ENCODE measurements at regions of chr7 and their contacts with region 1.

Region 1: DNA sequence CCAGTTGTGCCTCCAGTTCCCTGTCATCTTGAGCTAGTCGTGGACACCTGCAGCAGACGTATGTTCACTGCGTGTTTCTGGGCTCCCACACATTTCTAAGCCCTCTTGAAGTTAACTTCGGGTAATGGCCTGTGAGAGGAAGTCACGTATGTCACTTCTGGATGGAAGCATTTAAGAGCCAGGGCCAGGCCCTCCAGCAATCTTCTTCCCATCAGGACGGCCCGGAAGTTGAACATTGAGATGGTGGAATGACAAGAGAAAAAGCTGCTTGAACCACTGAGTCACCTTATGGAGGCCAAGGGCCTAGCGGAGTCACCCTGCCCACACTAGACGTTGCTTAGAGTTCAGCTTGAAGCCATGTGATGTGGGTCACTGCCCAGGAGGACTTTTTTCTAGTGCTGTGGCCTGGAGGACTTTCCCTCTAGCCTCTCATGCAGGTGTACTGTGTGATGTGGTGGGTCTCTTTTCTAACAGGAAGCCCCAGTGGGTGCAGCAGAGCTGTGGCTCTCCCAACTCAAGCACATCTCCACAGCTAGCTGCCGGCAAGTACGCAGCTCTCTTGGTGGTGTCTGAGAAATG is 13.5 kb downstream of the POR start:
- DNase-seq: peak; percentile 64
- CTCF ChIP-seq: no peak

Region 2: DNA sequence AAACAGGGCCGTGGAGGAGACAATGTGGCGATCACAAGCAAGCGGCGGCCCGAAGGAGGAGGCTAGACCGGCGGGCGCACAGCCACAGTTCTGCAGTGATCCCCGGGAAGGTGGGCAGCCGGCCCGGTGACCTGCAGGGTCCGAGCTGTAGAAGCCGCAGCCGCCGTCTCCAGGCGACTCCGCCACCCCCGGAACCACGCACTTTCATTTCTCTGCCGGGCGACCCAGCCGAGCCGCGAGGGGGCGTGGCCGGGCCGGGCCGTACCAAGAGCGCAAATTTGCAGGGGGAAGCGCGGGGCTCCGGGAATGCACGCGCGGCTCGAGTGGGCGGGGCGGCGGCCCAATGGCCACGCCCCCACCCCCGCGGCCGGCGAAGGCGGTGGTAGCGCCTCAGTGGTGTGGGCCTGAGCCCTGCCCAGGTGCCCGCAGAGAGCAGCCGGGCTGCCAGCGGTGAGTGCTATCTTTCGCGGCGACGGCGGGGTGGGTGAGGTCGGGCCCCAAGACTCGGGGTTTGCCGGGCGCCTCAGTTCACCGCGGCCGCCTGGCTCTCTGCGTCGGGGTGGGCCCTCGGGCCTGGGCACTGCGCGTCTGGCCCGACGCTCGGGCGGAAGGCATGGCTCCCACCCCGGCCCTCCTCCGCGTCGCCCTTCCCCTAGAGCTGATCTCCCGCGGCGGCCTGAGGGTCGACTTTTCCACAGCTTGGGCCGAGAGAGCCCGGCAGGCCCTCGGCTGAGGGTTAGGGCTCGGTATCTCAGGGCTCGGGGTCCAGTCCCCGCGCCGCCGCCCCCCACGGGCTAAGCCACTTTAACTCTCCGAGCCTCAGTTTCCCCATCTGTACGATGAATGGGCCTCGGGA is 13.5 kb before region 1 on chr7 and contains the start of gene POR:
- CTCF ChIA-PET with region 1: interaction called, 3 read pairs
- POLR2A ChIA-PET with region 1: interaction called, 21 read pairs
- DNase-seq: peak; percentile 97
- CTCF ChIP-seq: no peak